ENCODE measurements at regions of chr20 and their contacts with region 1.

Region 1: DNA sequence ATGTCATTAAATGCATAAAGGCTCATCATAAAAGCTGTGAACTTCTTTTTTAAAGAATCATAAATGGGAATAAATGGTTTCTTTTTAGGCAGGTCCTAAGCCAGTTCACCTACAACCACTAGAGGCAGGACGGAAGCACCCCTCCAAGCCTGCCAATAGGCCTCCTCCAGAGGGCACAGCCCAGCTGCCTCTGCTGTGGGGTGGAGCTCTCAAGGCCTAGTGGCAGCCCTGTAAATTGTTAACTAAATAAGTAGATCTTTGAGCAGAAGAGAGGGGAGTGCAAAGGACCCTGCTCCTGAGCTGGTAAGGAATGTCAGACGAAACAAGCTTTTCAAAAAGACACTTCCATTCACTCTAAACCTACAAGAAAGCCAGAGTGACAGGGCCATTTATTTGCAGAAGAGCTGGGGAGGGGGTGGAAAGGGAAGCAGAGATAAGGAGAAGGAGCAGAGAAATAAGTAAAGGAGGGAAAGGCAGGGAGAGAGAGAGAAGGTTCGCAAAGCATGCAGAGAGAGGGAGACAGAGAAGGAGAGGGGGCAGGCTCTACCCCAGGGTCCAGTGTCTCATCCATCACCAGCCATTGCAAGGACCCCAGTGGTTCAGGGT is 18.0 kb upstream of the MAFB start:
- ATAC-seq: peak; percentile 24 to 96 (median 56)
- H3K4me3 ChIP-seq: no peak overlapping the region
- H3K27ac ChIP-seq: no peak overlapping the region
- H3K4me1 ChIP-seq: peaks cover 5 to 37% of the 10 kb centered on the region in 2 donors

Region 2: DNA sequence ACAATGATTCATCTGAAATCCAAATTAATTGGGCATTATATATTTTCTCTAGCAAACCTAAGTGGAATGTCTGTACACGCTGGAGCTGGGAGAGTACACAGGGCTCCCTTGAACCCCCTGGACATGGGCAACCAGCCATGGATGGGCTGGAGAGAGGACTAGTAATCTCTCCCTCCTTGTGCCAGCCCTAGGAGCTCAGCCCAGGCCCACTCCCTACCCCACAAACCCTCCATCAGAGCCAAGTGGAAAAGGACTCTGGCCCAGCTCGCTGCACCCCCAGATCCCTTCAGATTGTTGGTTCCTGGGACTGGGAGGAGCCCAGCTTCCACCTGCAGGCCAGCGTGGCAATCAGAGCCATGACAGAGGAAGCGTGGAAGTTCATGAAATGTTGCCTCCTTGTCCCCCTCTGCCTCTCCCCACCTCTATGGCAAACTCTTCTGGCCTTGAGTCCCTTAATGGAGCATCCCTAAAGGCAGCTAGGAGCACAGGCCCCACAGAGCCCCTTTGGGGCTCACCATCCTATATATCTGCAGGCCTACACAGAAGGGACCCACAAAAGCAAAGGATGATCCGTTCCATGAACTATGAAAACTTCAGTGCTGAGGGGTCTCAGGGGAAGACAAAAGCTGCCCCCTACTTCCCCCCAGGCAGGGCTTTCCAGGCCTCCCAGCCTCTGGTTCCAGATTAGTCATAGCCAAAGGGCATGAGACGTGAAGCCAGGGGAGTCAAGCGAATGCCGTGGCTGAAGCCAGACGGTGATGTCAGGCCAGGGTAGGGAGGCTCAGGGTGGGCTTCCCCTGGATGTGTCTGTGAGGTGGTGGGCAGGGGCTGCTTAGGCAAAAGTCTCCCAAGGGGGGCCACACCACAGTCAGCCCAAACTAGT is 108.3 kb after region 1 on chr20:
- in situ Hi-C with region 1: no loop called
- ATAC-seq: no peak
- H3K4me3 ChIP-seq: no peak overlapping the region
- H3K27ac ChIP-seq: no peak overlapping the region
- H3K4me1 ChIP-seq: no peaks in the 10 kb centered on the region

Region 3: GRCh38 chr20:40868551-40869217 is 161.6 kb after region 1 on chr20:
- in situ Hi-C with region 1: no loop called
- ATAC-seq: peak in 5 of 8 experiments; percentile 14 to 88 (median 66)
- H3K4me3 ChIP-seq: no peak overlapping the region
- H3K27ac ChIP-seq: no peak overlapping the region
- H3K4me1 ChIP-seq: peaks cover 13 to 16% of the 10 kb centered on the region in 2 donors

Region 4: DNA sequence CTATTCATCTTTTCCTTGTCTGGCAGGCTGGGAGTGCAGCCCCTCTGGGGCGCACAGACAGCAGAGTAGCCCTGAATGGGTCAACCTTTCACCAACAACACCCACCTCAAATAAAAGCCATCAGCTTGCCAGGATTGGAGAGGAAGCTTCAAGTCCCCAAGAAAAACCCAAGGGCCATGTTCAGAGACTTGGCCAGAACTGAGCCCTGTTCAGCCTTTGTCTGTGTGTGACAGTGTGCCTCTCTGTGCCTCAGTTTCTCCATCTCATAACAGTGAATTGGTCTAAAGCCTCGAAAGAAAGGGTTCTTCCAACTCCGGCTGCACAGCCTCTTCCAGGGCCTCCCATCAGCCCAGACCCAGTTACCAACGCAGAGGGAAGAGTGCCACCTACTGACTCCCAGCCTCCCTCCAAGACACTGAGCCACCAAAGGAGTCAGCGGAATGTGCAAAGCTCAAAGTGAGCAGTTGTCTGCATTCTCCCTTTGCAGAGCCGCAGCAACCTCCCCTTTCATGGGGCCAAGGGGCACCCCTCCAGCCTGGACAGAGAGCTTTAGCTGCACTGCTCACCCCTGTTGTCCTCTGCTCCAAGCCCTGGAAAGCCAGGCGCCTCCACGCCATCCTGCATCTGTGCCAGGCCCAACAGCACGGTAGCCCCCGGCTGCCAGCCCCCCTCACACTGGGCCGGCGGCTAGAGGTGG is 238.8 kb after region 1 on chr20:
- in situ Hi-C with region 1: loop called in 2 of 9 experiments (anchors 25 kb)
- ATAC-seq: peak; percentile 98 to 100 (median 100)
- H3K4me3 ChIP-seq: no peak overlapping the region
- H3K27ac ChIP-seq: no peak overlapping the region
- H3K4me1 ChIP-seq: peaks cover 0 to 9% of the 10 kb centered on the region in 2 donors